ENCODE measurements at regions of chr15 and their contacts with region 1.

Region 1: DNA sequence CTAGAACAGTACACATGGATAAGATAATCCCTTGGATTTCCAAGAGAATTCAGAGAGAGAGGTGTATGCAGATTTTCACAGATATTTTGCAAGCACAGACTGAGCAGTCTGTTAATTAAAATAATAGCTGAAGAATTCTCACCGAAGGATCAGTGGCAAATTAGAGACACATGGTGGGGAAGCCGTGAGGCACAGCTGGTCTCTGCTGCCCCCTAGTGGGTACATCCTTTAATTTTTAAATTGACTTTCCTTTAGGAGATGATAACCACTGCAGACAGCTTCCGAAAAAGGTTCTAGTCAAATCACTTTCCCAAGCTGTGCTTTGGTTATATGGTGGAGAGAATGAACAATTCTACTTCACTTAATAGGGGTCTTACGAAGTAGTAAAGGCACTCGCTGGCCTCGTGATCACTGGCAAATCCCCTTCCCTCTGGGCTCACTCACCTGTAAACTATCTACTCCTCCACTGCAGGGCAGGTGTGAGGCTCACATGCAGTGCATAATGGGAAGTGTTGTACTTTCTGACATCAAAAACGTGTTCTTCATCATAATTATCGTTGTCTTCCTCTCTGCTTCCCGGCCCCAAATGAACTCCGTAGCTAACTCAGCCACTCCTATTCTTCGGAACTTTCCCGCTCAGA is 19.5 kb downstream of the MESD start:
- DNase-seq: no peak
- ATAC-seq: peak; percentile 80

Region 2: DNA sequence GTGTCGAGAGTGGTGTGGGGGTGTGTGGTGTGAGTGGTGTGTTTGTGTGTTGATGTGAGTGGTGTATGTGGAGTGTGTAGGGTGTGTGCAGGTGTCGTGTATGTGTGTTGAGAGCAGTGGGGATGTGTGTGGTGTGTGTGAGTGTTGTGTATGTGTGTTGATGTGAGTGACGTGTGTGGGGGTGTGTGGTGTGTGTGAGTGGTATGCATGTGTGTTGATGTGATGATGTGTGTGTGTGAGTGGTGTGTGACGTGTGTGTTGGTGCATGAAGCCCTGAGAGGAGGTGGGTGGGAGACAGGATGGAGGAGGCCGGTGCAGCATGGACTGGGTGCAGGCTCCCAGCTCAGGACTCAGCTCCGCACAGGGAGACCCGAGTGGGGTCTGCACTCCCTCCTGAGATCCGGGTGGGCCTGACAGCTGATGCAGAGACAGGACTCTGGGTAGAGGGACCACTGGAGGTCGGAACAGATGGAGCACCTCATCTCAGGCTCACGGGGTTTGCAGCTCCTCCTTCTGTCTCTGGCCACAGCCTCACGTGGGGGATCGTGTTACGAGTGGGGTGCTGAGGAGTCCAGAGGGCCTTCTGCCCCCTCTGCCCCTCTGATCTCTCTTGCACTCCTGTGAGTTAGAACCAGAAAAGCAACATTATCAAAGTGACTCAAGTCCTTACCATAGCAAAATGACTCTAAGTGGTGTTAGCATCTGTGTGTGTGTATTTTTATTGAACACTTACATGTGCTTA is 524.7 kb before region 1 on chr15:
- intact Hi-C with region 1: loop called (anchors 5 kb)
- DNase-seq: no peak
- ATAC-seq: no peak

Region 3: DNA sequence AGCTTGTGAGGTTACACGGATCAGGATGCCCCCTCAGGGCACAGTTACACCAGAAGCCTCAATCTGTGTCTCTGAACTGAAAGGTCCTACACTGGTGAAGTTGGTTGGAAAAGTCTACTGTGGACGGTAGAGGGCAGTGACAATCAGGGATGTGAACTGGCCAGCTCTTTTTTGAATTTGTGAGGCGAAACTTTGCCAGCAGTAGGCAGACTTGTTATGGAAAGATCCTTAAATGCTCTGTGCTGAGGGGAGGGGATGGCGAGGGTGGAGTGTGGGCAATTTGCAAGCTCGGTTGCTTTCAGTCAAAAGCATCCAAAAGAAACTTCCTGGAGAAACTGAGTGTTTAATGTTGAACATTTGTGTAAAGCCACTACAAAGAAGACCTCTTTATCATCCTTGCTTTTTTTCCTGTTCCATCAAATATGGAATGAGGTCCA is 402.4 kb before region 1 on chr15:
- intact Hi-C with region 1: loop called (anchors 5 kb)
- DNase-seq: no peak
- ATAC-seq: peak; percentile 84

Region 4: DNA sequence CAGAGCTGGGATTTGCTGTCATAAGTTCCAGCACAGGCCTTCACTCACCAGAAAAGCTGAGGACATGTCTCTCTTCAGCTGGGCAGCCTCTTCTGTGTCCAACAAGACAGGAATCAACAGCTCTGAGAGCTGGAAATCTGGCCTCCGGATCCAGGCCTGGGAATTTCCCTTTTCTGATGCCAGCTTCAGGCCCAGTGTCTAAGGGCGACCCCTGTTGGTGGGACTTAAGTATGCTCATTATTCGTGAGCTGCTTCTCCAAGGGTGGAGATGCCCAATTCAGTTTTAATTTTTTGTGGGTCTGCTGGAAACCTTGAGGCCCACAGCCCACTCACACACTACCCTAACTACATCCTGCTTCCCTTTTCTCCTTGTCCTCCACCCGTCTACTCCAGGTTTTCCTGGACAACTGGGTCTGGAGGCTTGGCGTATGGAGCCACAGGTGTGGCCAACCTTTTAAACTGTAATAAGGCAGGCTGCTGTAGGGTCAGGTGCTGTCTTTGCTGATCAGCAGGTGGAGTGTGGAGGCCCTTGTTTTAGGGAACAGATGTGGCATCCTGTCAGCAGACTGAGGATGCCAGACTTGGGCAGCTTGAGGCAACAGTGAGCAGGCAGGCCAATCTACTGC is 193.6 kb before region 1 on chr15:
- intact Hi-C with region 1: loop called (anchors 5 kb)
- DNase-seq: peak; percentile 62
- ATAC-seq: peak; percentile 64

Region 5: DNA sequence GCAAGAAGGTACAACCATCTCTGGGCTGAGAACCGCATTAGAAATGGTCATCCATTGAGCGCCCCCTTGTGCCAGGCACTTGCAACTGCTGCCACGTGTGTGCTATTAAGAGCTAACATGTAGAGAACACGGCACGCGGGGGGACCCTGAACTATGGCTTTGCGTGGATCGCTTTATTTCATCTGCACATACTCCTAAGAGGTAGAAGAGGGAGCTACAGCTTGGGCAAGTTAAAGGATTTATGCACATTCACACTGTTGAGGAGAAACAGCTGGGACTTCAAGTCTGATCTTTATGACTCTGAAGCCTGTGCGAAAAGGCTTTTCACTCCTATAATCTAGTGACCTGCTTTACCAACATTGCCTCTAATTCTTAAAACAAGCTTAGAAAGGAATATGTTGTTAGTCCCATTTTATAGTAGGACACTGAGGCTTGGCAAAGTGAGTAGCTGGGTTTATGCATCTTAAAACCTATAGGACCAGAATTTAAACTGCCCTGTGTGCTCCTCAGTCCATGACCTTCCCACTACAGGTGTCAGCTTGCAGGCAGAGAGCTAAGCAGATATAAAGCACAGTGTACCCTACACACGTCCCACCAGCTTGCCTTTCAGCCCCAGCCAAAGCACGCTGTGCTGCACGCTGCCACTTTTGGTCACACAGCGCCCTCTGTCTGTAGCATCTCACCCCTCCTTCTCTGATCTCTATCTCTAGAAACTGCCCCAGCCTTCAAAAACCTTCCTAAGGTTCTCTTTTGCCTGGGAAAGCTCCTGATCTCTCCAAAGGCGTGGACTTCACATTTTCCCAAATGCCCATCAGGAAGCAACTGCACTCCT is 296.0 kb after region 1 on chr15:
- intact Hi-C with region 1: loop called (anchors 10 kb)
- DNase-seq: peak; percentile 86
- ATAC-seq: peak; percentile 96

Region 6: DNA sequence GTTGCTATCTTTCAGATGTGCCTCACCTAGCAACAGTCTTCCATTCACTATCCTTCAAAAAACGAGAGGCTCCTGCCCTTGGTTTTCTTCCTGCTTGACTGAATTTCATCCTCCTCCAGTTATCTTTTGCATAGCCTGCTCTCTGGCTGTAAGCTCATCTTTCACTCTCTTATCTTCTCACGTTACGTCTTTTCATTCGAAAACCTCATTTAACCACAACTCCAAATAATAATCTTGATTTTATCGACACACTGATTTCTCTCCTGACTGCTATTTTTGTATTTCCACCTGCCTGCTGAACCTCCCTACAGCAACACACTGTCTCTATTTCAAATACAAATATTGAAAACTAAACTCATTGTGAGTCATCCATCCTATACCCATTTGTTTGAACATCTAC is 634.6 kb after region 1 on chr15:
- intact Hi-C with region 1: no loop called
- DNase-seq: no peak
- ATAC-seq: no peak

Measured in Right ventricle myocardium superior (tissue), 1 donor.